Dendritic cell treated with granulocyte-macrophage colony-stimulating factor and Interleukin-4, amounts not matched to agents 40 ng/mL and 50 ng/mL, for 4 days (primary cell): ENCODE measurements at regions of chr12 and their contacts with region 1.

Region 1: GRCh38 chr12:10448236-10448635 is 4.9 kb downstream of the KLRC1 start:
- H3K4me3 Mint-ChIP-seq: no peak overlapping the region
- H3K27ac Mint-ChIP-seq: no peak overlapping the region
- H3K4me1 Mint-ChIP-seq: no peaks in the 10 kb centered on the region
- H3K27me3 Mint-ChIP-seq: no peaks in the 10 kb centered on the region

Region 2: GRCh38 chr12:10501031-10501430 is 52.8 kb after region 1 on chr12:
- intact Hi-C with region 1: loop called (anchors 5 kb)
- H3K4me3 Mint-ChIP-seq: no peak overlapping the region
- H3K27ac Mint-ChIP-seq: no peak overlapping the region
- H3K4me1 Mint-ChIP-seq: no peaks in the 10 kb centered on the region
- H3K27me3 Mint-ChIP-seq: peaks cover 7% of the 10 kb centered on the region